GM12878 (cell line): ENCODE measurements at regions of chr6 and their contacts with region 1.

Region 1: GRCh38 chr6:37018198-37019064 is 13.0 kb downstream of the FGD2 start:
- DNase-seq: peak; percentile 61
- ATAC-seq: peak; percentile 100
- H3K4me3 ChIP-seq: no peak overlapping the region
- H3K27ac ChIP-seq: no peak overlapping the region
- H3K4me1 ChIP-seq: peaks cover 7% of the 10 kb centered on the region; the same call in 1 of the 2 replicates
- H3K27me3 ChIP-seq: no peaks in the 10 kb centered on the region
- CTCF ChIP-seq: peak; percentile 96 to 99 (median 97); a peak in 5 of 6 replicates
- EP300 ChIP-seq: no peak
- POLR2A ChIP-seq: no peak
- RAD21 ChIP-seq: peak; percentile 96

Region 2: DNA sequence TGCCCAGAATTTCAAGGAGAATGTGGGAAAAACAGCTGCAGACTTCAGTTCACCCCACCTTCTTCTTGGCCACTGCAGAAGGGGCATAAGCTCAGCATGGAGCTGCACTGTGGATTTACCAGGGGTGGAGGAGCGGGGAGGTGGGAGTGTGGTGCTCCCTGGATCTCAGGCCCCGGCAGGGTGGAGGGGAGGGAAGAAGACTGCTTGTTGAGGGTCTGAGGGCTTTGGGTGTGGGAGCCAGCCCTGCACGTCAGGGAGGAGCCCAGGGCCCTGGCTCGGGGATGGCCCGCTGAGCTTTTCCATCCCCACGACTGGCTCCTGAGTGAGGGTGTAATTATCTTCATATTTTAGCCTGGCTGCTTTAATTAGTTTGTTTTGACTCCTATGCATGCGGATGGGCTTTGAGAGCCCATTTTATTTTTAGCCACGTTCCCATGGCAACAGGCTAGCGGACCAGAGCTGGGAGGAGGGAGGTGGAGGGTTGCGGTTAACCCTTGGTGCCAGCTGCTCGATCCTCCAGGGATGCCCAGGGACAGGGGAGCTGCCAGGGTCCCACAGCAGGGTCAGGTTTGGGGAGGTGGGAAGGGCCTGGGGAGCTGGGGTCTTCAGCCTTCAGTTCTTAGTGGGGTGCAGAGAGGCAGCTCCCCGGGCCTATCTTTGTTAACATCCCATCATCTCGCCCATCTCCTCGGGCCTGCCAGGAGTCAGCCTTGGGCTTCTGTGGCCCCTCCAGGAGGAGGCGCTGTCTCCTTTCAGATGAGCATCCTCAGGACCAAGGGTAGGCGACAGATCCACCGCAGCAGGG is 252.6 kb before region 1 on chr6:
- CTCF ChIA-PET with region 1: interaction called, 72 read pairs
- POLR2A ChIA-PET with region 1: no interaction called
- RAD21 ChIA-PET with region 1: interaction called, 54 read pairs
- SMC1A ChIA-PET with region 1: interaction called, 43 read pairs
- in situ Hi-C with region 1: loop called (anchors 5 kb)
- intact Hi-C with region 1: loop called (anchors 1 kb)
- DNase-seq: no peak
- ATAC-seq: peak; percentile 98
- H3K4me3 ChIP-seq: no peak overlapping the region
- H3K27ac ChIP-seq: no peak overlapping the region
- H3K4me1 ChIP-seq: peaks cover 17% of the 10 kb centered on the region
- H3K27me3 ChIP-seq: no peaks in the 10 kb centered on the region
- CTCF ChIP-seq: peak; percentile 97 to 98 (median 98); a peak in 5 of 6 replicates
- EP300 ChIP-seq: no peak
- POLR2A ChIP-seq: no peak
- RAD21 ChIP-seq: peak; percentile 98

Region 3: DNA sequence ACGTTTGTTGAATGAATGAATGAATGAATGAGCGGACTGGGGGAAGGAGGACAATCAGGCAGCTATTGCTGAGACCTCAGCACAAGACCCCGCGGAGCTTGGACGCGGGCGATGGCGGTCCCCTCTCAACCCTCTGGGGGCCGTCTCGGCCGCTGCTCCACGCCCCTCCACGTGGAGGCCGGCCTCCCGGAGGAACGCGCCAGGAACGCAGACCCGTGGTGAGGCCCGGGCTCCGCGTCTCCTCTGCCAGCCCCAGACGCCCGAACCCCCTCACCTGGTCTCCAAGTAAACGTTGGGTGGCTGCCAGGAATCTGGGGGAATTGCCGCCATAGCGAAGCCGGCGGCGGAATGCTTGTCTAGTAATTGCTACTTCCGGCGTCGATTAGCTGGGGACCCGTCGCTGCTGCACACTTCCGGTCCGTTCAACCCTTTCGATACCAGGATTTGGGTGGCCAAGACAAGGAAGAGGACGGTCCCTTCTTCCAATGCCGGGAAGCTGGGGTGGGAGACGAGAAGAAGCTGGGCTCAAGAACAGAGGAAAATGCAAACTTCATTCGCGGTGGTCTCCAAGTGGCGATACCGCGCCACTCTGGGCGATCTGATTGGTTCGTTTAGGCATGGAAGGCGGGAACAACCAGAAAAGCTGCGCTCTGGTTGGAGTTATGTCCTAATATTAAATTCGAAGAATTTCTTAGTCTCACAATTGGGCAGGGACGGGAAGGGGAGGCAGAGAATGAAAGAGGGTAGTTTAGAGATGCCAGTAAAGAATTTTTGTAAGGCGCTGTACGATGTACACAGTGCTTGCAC is 143.8 kb before region 1 on chr6 and contains the start of gene PPIL1:
- CTCF ChIA-PET with region 1: interaction called, 26 read pairs
- POLR2A ChIA-PET with region 1: no interaction called
- RAD21 ChIA-PET with region 1: interaction called, 26 read pairs
- SMC1A ChIA-PET with region 1: interaction called, 15 read pairs
- in situ Hi-C with region 1: no loop called
- intact Hi-C with region 1: no loop called
- DNase-seq: peak; percentile 78
- ATAC-seq: peak; percentile 93
- H3K4me3 ChIP-seq: peak within 1 kb of the TSS; percentile 79
- H3K27ac ChIP-seq: peak within 1 kb of the TSS; percentile 78
- H3K4me1 ChIP-seq: peaks cover 6% of the 10 kb centered on the region; the same call in 1 of the 2 replicates
- H3K27me3 ChIP-seq: no peaks in the 10 kb centered on the region
- CTCF ChIP-seq: no peak
- EP300 ChIP-seq: no peak
- POLR2A ChIP-seq: peak; percentile 81
- RAD21 ChIP-seq: no peak
- polyA plus RNA-seq, gene PPIL1: 74.4 to 95.8 TPM

Region 4: GRCh38 chr6:36979347-36979742 is 39.1 kb before region 1 on chr6:
- CTCF ChIA-PET with region 1: interaction called, 84 read pairs
- POLR2A ChIA-PET with region 1: interaction called, 4 read pairs
- RAD21 ChIA-PET with region 1: interaction called, 38 read pairs
- SMC1A ChIA-PET with region 1: interaction called, 60 read pairs
- in situ Hi-C with region 1: no loop called
- intact Hi-C with region 1: loop called (anchors 1 kb)
- DNase-seq: no peak
- ATAC-seq: no peak
- H3K4me3 ChIP-seq: no peak overlapping the region
- H3K27ac ChIP-seq: no peak overlapping the region
- H3K4me1 ChIP-seq: peaks cover 8% of the 10 kb centered on the region
- H3K27me3 ChIP-seq: no peaks in the 10 kb centered on the region
- CTCF ChIP-seq: 0 out of 6 replicates have a peak, but pooled peaks of 1 of the 3 experiments have one; percentile 22
- EP300 ChIP-seq: no peak
- POLR2A ChIP-seq: no peak
- RAD21 ChIP-seq: peak; percentile 44

Region 5: DNA sequence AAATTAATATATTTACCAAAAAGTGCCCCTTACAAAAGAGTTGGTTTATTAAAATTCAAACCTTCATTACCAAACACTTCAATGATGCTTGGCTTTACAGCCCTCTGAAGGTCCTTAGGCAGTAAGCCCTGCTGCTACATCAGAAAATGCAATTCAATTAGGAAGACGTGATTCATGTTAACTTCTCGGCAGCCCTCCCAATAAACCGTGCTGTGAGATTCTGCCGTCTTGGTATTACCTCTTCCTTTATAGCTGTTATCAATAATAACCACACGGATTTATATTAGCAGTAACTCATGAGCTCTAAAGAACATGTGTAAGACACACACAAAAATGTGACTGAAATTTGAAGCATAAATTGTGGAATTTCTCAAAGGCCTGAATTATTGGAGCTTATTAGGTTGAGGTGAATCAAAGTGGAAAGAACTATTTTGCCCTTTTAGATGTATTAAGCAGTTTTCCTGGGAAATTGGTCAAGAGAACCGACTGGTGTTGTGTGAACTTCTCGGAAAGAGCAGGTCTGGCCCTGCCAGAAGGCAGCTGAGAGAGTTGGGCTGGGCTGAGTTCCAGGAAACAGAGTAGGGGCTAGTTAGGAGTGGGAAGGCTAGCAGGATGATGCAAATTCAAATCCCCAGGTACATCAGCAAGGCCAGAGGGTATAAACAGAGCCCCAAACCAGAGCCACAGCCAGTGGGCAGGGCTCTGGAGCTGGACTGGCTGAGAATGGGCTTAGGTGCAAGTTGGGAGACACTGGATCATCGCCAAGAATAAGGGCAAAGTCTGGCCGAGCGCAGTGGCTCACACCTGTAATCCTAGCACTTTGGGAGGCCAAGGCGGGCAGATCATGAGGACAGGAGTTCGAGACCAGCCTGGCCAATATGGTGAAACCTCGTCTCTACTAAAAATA is 20.1 kb after region 1 on chr6:
- CTCF ChIA-PET with region 1: interaction called, 11 read pairs
- POLR2A ChIA-PET with region 1: no interaction called
- RAD21 ChIA-PET with region 1: interaction called, 3 read pairs
- SMC1A ChIA-PET with region 1: interaction called, 3 read pairs
- in situ Hi-C with region 1: no loop called
- intact Hi-C with region 1: no loop called
- DNase-seq: no peak
- ATAC-seq: no peak
- H3K4me3 ChIP-seq: no peak overlapping the region
- H3K27ac ChIP-seq: no peak overlapping the region
- H3K4me1 ChIP-seq: no peaks in the 10 kb centered on the region
- H3K27me3 ChIP-seq: no peaks in the 10 kb centered on the region
- CTCF ChIP-seq: no peak
- EP300 ChIP-seq: no peak
- POLR2A ChIP-seq: no peak
- RAD21 ChIP-seq: no peak

Region 6: GRCh38 chr6:37190159-37190535 is 171.7 kb after region 1 on chr6:
- CTCF ChIA-PET with region 1: interaction called, 18 read pairs
- POLR2A ChIA-PET with region 1: no interaction called
- RAD21 ChIA-PET with region 1: interaction called, 5 read pairs
- SMC1A ChIA-PET with region 1: interaction called, 6 read pairs
- in situ Hi-C with region 1: no loop called
- intact Hi-C with region 1: no loop called
- DNase-seq: no peak
- ATAC-seq: no peak
- H3K4me3 ChIP-seq: no peak overlapping the region
- H3K27ac ChIP-seq: no peak overlapping the region
- H3K4me1 ChIP-seq: no peaks in the 10 kb centered on the region; the same call in 1 of the 2 replicates
- H3K27me3 ChIP-seq: no peaks in the 10 kb centered on the region
- CTCF ChIP-seq: no peak
- EP300 ChIP-seq: no peak
- POLR2A ChIP-seq: no peak
- RAD21 ChIP-seq: no peak

Region 7: DNA sequence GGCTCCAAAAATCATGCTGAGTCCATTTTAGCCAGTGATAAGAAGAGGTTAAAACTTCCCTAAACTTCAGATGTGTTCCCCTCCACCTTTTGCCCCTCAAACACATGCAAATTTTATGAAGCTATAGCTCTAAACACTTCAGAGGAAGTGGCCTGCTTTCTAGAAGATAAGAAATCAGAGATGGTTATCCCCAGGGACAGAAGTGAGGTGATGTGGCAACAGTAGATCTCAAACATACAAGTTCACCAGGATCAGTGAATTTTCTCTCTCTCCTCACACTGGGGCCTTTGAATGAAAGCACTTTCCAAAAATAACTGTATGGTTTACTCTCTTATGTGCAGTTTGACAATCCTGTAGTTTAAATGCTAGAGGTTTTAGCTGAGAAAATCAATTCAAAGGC is 1289.3 kb after region 1 on chr6:
- CTCF ChIA-PET with region 1: no interaction called
- POLR2A ChIA-PET with region 1: no interaction called
- RAD21 ChIA-PET with region 1: no interaction called
- SMC1A ChIA-PET with region 1: no interaction called
- in situ Hi-C with region 1: no loop called
- intact Hi-C with region 1: no loop called
- DNase-seq: peak; percentile 72
- ATAC-seq: peak; percentile 90
- H3K4me3 ChIP-seq: peak overlapping the region; percentile 13; the same call in 1 of the 2 replicates
- H3K27ac ChIP-seq: peak overlapping the region; percentile 82
- H3K4me1 ChIP-seq: peaks cover 40% of the 10 kb centered on the region
- H3K27me3 ChIP-seq: no peaks in the 10 kb centered on the region
- CTCF ChIP-seq: no peak
- EP300 ChIP-seq: peak in 1 of 2 experiments; percentile 42; a peak in 1 of 4 replicates
- POLR2A ChIP-seq: no peak
- RAD21 ChIP-seq: 0 out of 2 replicates have a peak, but pooled peaks have one; percentile 4